ENCODE measurements at regions of chr11 and their contacts with region 1.

Region 1: GRCh38 chr11:57493507-57494503 is 21.7 kb downstream of the SLC43A1 start:
- DNase-seq: peak; percentile 82
- H3K4me3 Mint-ChIP-seq: no peak overlapping the region
- H3K27ac Mint-ChIP-seq: peak overlapping the region; percentile 95
- H3K4me1 Mint-ChIP-seq: peaks cover 35% of the 10 kb centered on the region
- H3K27me3 Mint-ChIP-seq: no peaks in the 10 kb centered on the region
- CTCF ChIP-seq: peak; percentile 94

Region 2: GRCh38 chr11:57456960-57457642 is 36.7 kb before region 1 on chr11:
- CTCF ChIA-PET with region 1: interaction called, 16 read pairs
- intact Hi-C with region 1: no loop called
- DNase-seq: peak; percentile 88
- H3K4me3 Mint-ChIP-seq: peak overlapping the region; percentile 9
- H3K27ac Mint-ChIP-seq: no peak overlapping the region
- H3K4me1 Mint-ChIP-seq: peaks cover 43% of the 10 kb centered on the region
- H3K27me3 Mint-ChIP-seq: peaks cover 42% of the 10 kb centered on the region
- CTCF ChIP-seq: peak; percentile 96

Region 3: GRCh38 chr11:57480409-57481137 is 13.2 kb before region 1 on chr11:
- CTCF ChIA-PET with region 1: interaction called, 11 read pairs
- intact Hi-C with region 1: no loop called
- DNase-seq: peak; percentile 79
- H3K4me3 Mint-ChIP-seq: no peak overlapping the region
- H3K27ac Mint-ChIP-seq: no peak overlapping the region
- H3K4me1 Mint-ChIP-seq: peaks cover 17% of the 10 kb centered on the region
- H3K27me3 Mint-ChIP-seq: peaks cover 14% of the 10 kb centered on the region
- CTCF ChIP-seq: peak; percentile 68

Region 4: DNA sequence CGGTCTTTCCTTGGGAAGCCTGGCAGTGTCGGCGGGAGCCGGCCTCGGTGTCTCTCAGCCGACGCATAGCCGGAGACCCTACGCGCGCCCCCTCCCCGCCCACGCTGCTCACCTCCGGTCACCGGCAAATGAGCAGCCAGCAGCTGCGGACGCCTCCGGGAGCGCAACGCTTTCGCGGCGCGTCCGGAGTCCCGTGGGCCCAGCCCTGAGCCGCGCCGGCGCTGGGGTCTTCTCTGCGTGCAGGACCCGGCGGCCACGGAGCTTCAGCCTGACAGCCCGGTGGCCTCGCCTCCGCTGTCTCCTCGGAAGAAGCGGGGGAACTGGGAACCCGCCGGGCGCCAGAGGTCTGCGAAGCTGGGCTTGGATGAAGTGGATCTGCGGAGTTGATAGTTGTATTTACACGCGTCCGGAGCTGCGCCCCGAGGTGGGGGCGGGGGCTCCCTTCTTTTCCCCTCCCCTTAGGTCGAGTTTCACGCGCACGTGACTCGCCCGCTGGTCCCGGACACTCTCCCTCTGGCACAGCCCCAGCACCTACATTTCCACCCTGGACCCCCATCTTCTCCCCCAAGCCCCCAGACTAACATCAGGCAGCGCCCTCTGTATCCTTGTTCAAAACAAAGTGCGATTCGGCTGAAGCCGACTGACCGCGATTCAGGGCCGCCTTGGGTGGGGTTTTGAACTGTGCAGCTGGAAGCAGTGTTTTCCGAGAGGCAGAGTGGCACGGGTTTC is 21.7 kb after region 1 on chr11 and contains the start of gene SLC43A1:
- CTCF ChIA-PET with region 1: interaction called, 16 read pairs
- intact Hi-C with region 1: no loop called
- DNase-seq: peak; percentile 49
- H3K4me3 Mint-ChIP-seq: peak within 1 kb of the TSS; percentile 85
- H3K27ac Mint-ChIP-seq: peak within 1 kb of the TSS; percentile 42
- H3K4me1 Mint-ChIP-seq: peaks cover 8% of the 10 kb centered on the region
- H3K27me3 Mint-ChIP-seq: no peaks in the 10 kb centered on the region
- CTCF ChIP-seq: no peak
- total RNA-seq, gene SLC43A1: 9.5 and 12.5 TPM in 2 replicates

Region 5: GRCh38 chr11:57530596-57531507 is 37.0 kb after region 1 on chr11 and contains the start of gene TIMM10:
- CTCF ChIA-PET with region 1: interaction called, 42 read pairs
- intact Hi-C with region 1: loop called (anchors 1 kb)
- DNase-seq: peak; percentile 91
- H3K4me3 Mint-ChIP-seq: peak within 1 kb of the TSS; percentile 78
- H3K27ac Mint-ChIP-seq: peak within 1 kb of the TSS; percentile 65
- H3K4me1 Mint-ChIP-seq: peaks cover 12% of the 10 kb centered on the region
- H3K27me3 Mint-ChIP-seq: peaks cover 10% of the 10 kb centered on the region
- CTCF ChIP-seq: no peak
- total RNA-seq, gene TIMM10: 68.5 and 73.5 TPM in 2 replicates

Region 6: DNA sequence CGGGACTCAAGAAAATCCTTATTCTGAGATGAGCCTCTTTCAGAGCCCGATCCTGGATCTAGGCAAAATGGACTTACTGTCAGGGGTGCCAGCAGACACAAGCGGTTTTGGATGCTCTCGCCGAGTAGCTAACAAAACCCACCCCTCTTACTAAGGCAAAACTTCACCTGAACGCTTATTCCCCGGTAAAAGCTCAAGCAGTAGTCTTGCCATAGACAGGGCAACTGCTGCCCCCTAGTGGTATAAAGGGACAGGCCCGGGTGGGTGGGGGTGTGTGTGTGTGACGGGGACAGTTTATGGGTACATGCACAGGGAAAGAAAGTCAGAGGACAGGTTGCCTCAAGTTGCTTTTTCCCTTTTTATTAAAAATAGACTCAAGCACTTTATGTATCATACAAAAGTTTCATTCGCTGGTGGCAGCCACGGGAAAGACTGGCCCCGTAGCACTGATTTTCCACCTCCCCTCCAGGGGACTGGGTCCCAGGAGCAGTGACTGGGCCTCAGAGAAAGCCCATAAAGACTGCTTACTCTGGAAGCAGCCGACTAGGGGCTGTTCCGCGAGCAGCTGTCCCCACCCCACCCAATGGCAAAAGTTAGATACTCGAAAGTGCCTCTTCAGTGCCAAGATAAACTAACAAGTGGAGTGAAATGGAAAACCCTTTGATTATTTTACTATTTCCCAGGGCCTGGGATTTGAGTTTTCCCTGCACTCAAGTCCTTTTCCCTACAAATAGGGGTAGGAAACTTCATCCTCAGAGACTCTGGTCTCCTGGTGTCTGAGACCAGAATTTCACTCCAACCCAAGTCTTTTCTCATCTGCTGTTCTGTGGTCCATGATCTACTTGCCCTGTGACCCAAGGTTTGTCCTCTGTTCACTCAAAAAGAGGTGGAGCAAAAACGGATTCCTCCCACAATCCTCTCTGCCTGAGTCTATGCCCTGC is 151.2 kb after region 1 on chr11:
- CTCF ChIA-PET with region 1: interaction called, 17 read pairs
- intact Hi-C with region 1: loop called (anchors 1 kb)
- DNase-seq: peak; percentile 88
- H3K4me3 Mint-ChIP-seq: no peak overlapping the region
- H3K27ac Mint-ChIP-seq: no peak overlapping the region
- H3K4me1 Mint-ChIP-seq: peaks cover 28% of the 10 kb centered on the region
- H3K27me3 Mint-ChIP-seq: peaks cover 66% of the 10 kb centered on the region
- CTCF ChIP-seq: peak; percentile 73

Region 7: GRCh38 chr11:57772562-57772961 is 278.8 kb after region 1 on chr11:
- CTCF ChIA-PET with region 1: no interaction called
- intact Hi-C with region 1: no loop called
- DNase-seq: no peak
- H3K4me3 Mint-ChIP-seq: peak overlapping the region; percentile 52
- H3K27ac Mint-ChIP-seq: peak overlapping the region; percentile 62
- H3K4me1 Mint-ChIP-seq: peaks cover 80% of the 10 kb centered on the region
- H3K27me3 Mint-ChIP-seq: no peaks in the 10 kb centered on the region
- CTCF ChIP-seq: no peak